ENCODE measurements at regions of chr3 and their contacts with region 1.

Region 1: GRCh38 chr3:141870091-141870687 is 6.3 kb upstream of the ATP1B3 start:
- DNase-seq: no peak
- ATAC-seq: no peak
- H3K4me3 ChIP-seq: no peak overlapping the region
- H3K4me3 Mint-ChIP-seq: no peak overlapping the region
- H3K27ac ChIP-seq: no peak overlapping the region
- H3K27ac Mint-ChIP-seq: no peak overlapping the region
- H3K4me1 ChIP-seq: peaks cover under 1 to 4% of the 10 kb centered on the region in 2 donors
- H3K4me1 Mint-ChIP-seq: no peaks in the 10 kb centered on the region
- H3K27me3 ChIP-seq: no peaks in the 10 kb centered on the region
- H3K27me3 Mint-ChIP-seq: no peaks in the 10 kb centered on the region
- CTCF ChIP-seq: no peak

Region 2: DNA sequence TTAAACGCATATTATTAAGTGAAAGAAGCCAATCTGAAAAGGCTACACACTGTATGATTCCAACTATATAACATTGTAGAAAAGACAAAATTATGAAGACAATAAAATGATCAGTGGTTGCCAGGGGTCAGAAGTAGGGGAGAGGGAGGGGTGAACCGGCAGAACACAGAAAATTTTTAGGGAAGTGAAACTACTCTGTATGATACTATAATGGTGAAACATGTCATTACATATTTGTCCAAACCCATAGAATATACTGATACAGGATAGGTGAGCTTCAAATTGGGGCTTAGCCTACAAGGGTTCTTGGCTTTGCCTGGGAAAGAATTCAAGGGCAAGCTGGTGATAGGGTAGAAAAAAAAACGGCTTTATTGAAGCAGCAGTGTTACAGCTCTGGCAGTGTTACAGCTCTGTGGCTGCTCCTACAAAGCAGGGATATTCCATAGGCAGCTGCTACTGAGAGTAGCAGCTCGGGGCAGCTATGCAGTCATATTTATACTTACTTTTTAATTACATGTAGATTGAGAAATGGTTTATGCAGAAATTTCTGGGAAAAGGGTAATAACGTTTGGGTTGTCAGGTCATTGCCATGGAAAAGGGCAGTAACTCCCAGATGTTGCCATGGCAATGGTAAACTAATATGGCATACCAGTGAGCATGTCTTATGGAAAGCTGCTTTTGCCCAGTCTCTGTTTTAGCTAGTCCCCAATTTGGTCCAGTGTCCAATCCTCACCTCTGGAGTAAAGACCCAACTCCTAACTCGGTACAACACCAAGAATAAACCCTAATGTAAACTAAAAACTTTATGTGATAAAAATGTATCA is 1053.6 kb before region 1 on chr3:
- CTCF ChIA-PET with region 1: no interaction called
- POLR2A ChIA-PET with region 1: no interaction called
- intact Hi-C with region 1: no loop called
- DNase-seq: peak; percentile 63
- ATAC-seq: peak; percentile 92
- H3K4me3 ChIP-seq: no peak overlapping the region
- H3K4me3 Mint-ChIP-seq: peak overlapping the region; percentile 17
- H3K27ac ChIP-seq: no peak overlapping the region
- H3K27ac Mint-ChIP-seq: peak overlapping the region; percentile 33
- H3K4me1 ChIP-seq: peaks cover 10 to 13% of the 10 kb centered on the region in 2 donors
- H3K4me1 Mint-ChIP-seq: peaks cover 21% of the 10 kb centered on the region
- H3K27me3 ChIP-seq: no peaks in the 10 kb centered on the region
- H3K27me3 Mint-ChIP-seq: peaks cover 10% of the 10 kb centered on the region
- CTCF ChIP-seq: no peak

Region 3: GRCh38 chr3:141656810-141657209 is 213.4 kb before region 1 on chr3:
- CTCF ChIA-PET with region 1: no interaction called
- POLR2A ChIA-PET with region 1: interaction called, 22 read pairs
- intact Hi-C with region 1: no loop called
- DNase-seq: no peak
- ATAC-seq: no peak
- H3K4me3 ChIP-seq: no peak overlapping the region
- H3K4me3 Mint-ChIP-seq: no peak overlapping the region
- H3K27ac ChIP-seq: no peak overlapping the region
- H3K27ac Mint-ChIP-seq: no peak overlapping the region
- H3K4me1 ChIP-seq: peaks cover 9 to 10% of the 10 kb centered on the region in 2 donors
- H3K4me1 Mint-ChIP-seq: peaks cover 6% of the 10 kb centered on the region
- H3K27me3 ChIP-seq: peaks cover 0 to 42% (median 22%) of the 10 kb centered on the region in 4 experiments
- H3K27me3 Mint-ChIP-seq: peaks cover 54% of the 10 kb centered on the region
- CTCF ChIP-seq: no peak

Region 4: DNA sequence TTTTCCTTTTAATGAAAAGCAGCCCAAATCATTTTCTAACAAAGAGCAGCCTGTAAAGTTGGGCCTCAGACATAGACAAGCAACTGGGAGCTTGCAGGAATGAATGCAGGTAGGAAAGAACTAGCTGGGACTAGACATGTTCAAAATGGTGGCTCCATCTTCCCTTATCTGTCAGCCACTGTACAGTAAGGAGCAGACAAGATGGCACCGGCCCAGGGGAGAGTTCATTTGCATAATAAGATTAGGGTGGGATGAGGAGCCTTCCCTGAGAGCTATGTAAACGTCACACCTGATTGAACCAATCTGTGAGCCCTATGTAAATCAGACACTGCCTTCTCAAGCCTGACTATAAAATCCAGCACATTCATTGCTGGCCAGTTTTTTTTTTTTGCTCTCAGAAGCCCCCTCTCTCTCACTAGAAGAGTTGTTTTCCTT is 414.9 kb after region 1 on chr3:
- CTCF ChIA-PET with region 1: no interaction called
- POLR2A ChIA-PET with region 1: no interaction called
- intact Hi-C with region 1: no loop called
- DNase-seq: no peak
- ATAC-seq: no peak
- H3K4me3 ChIP-seq: no peak overlapping the region
- H3K4me3 Mint-ChIP-seq: no peak overlapping the region
- H3K27ac ChIP-seq: no peak overlapping the region
- H3K27ac Mint-ChIP-seq: no peak overlapping the region
- H3K4me1 ChIP-seq: no peaks in the 10 kb centered on the region
- H3K4me1 Mint-ChIP-seq: no peaks in the 10 kb centered on the region
- H3K27me3 ChIP-seq: no peaks in the 10 kb centered on the region
- H3K27me3 Mint-ChIP-seq: no peaks in the 10 kb centered on the region
- CTCF ChIP-seq: no peak

Region 5: DNA sequence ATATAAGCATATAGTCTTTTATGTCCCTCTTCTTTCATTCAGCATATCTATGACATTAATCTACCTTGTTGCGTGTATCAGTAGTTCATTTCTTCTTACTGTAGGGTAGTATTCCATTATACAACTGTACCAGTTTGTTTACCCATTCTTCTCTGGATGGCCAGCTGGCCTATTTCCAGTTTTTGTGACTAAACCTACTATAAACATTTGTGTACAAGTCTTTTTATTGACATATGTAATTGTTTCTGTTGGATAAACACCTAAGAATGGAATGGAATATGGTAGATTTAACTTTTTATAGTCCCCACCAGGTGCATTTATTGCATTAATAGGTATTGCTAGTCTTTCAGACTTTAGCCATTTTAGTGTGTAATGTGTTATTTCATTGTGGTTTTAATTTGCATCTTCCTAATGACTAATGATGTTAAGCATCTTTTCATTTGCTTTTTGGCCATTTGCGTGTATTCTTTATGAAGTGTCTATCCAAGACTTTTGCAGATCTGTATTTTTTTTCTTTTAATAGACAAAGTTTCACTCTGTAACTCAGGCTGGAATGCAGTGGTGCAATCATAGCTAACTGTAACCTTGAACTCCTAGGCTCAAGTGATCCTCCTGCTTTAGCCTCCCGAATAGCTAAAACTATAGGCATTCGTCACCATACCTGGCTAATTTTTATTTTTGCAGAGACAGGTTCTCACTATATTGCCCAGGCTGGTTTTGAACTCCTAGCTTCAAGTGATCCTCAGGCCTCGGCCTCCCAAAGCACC is 619.6 kb after region 1 on chr3:
- CTCF ChIA-PET with region 1: no interaction called
- POLR2A ChIA-PET with region 1: no interaction called
- intact Hi-C with region 1: no loop called
- DNase-seq: no peak
- ATAC-seq: no peak
- H3K4me3 ChIP-seq: no peak overlapping the region
- H3K4me3 Mint-ChIP-seq: no peak overlapping the region
- H3K27ac ChIP-seq: no peak overlapping the region
- H3K27ac Mint-ChIP-seq: no peak overlapping the region
- H3K4me1 ChIP-seq: no peaks in the 10 kb centered on the region
- H3K4me1 Mint-ChIP-seq: no peaks in the 10 kb centered on the region
- H3K27me3 ChIP-seq: no peaks in the 10 kb centered on the region
- H3K27me3 Mint-ChIP-seq: no peaks in the 10 kb centered on the region
- CTCF ChIP-seq: no peak